MCF 10A (cell line): ENCODE measurements at regions of chr12 and their contacts with region 1.

Region 1: GRCh38 chr12:1661553-1662335 is 29.1 kb upstream of the ADIPOR2 start:
- DNase-seq: peak; percentile 90
- H3K4me3 Mint-ChIP-seq: peak overlapping the region; percentile 70
- H3K27ac Mint-ChIP-seq: peak overlapping the region; percentile 42
- H3K4me1 Mint-ChIP-seq: peaks cover 9% of the 10 kb centered on the region
- H3K27me3 Mint-ChIP-seq: no peaks in the 10 kb centered on the region
- CTCF ChIP-seq: no peak

Region 2: GRCh38 chr12:1488908-1489381 is 172.8 kb before region 1 on chr12:
- CTCF ChIA-PET with region 1: no interaction called
- POLR2A ChIA-PET with region 1: no interaction called
- intact Hi-C with region 1: no loop called
- DNase-seq: peak; percentile 38
- H3K4me3 Mint-ChIP-seq: no peak overlapping the region
- H3K27ac Mint-ChIP-seq: peak overlapping the region; percentile 65
- H3K4me1 Mint-ChIP-seq: peaks cover 13% of the 10 kb centered on the region
- H3K27me3 Mint-ChIP-seq: no peaks in the 10 kb centered on the region
- CTCF ChIP-seq: no peak

Region 3: GRCh38 chr12:1776170-1776948 is 114.6 kb after region 1 on chr12:
- CTCF ChIA-PET with region 1: no interaction called
- POLR2A ChIA-PET with region 1: interaction called, 10 read pairs
- intact Hi-C with region 1: no loop called
- DNase-seq: peak; percentile 89
- H3K4me3 Mint-ChIP-seq: peak overlapping the region; percentile 0
- H3K27ac Mint-ChIP-seq: peak overlapping the region; percentile 11
- H3K4me1 Mint-ChIP-seq: peaks cover 49% of the 10 kb centered on the region
- H3K27me3 Mint-ChIP-seq: no peaks in the 10 kb centered on the region
- CTCF ChIP-seq: no peak